OCI-LY7 (cell line): ENCODE measurements at regions of chr5 and their contacts with region 1.

Region 1: GRCh38 chr5:179858586-179859427 is at the start of gene MRNIP:
- DNase-seq: peak; percentile 96
- H3K4me3 ChIP-seq: peak within 1 kb of the TSS; percentile 90
- H3K27ac ChIP-seq: peak within 1 kb of the TSS; percentile 69
- H3K4me1 ChIP-seq: peaks cover 27% of the 10 kb centered on the region
- CTCF ChIP-seq: no peak
- total RNA-seq, gene MRNIP: 76.2 and 78.7 TPM in 2 replicates

Region 2: GRCh38 chr5:179821581-179822432 is 37.0 kb before region 1 on chr5:
- CTCF ChIA-PET with region 1: no interaction called
- POLR2A ChIA-PET with region 1: interaction called, 5 read pairs
- intact Hi-C with region 1: loop called (anchors 1 kb)
- DNase-seq: peak; percentile 80
- H3K4me3 ChIP-seq: peak overlapping the region; percentile 99
- H3K27ac ChIP-seq: peak overlapping the region; percentile 59
- H3K4me1 ChIP-seq: peaks cover 32% of the 10 kb centered on the region
- CTCF ChIP-seq: 0 out of 2 replicates have a peak, but pooled peaks have one; percentile 10

Region 3: DNA sequence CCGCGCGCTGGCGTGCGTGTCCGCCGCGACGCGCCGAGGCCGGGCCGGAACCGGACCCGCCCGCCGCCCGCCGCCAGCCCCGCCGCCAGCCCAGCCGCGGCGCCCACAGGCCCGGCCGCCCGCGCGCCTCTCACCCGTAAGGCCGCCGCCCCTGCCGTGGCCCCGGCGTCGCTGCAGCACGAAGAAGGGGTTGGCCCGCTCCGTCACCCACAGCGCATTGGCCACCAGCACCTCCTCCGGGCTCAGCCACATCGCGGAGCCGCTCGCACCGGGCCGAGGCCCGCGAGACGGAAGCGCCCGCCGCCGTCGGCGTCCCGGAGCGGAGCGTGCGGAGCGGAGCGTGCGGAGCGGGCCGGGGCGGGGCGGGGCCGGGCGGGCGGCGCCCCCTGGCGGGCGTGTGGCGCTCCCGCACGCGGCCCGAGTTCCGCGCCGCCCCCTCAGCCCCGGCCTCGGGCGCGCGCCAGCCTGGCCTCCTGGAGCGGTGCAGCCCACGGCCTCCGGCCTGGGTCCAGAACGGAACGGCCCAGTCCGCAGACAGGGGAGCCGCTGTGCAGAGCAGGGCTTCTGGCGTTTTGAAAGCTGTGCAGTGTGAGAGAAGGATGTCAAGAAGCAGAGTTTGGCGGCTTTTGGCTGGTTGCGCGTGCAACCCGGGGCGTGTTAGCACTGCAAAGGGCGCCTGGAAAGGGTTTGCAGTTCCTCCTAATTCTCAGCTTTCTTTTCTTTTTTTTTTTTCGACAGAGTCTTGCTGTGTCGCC is 48.9 kb after region 1 on chr5 and contains the start of gene TBC1D9B:
- CTCF ChIA-PET with region 1: no interaction called
- POLR2A ChIA-PET with region 1: no interaction called
- intact Hi-C with region 1: loop called (anchors 5 kb)
- DNase-seq: peak; percentile 85
- H3K4me3 ChIP-seq: peak within 1 kb of the TSS; percentile 86
- H3K27ac ChIP-seq: peak within 1 kb of the TSS; percentile 26
- H3K4me1 ChIP-seq: peaks cover 19% of the 10 kb centered on the region
- CTCF ChIP-seq: peak; percentile 31; the same call in 1 of the 2 replicates
- total RNA-seq, gene TBC1D9B: 49.4 and 52.2 TPM in 2 replicates

Region 4: DNA sequence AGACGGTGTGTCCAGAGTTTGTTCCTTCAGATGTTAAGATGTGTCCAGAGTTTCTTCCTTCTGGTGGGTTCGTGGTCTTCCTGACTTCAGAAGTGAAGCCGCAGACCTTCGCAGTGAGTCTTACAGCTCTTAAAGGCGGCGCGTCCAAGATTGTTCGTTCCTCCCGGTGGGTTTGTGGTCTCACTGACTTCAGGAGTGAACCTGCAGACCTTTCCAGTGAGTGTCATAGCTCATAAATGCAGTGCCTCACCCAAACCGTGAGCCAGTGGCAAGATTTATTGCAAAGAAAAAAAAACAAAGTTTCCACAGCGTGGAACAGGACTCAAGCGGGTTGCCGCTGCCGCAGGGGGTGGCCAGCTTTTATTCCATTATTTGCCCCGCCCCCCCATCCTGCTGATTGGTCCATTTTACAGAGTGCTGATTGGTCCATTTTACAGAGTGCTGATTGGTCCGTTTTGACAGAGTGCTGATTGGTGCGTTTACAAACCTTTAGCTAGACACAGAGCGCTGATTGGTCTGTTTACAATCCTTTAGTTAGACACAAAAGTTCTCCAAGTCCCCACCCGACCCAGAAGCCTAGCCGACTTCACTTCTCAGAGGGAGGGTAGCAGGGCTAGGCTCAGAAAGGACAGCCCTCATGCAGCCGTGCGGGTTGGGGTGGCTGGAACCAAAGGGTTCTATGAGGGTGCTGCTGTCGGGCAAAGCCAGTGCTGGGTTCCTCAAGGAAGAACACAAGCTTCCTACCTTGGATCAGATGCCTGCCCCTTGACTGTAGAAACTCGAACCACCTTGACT is 221.9 kb after region 1 on chr5:
- CTCF ChIA-PET with region 1: no interaction called
- POLR2A ChIA-PET with region 1: no interaction called
- intact Hi-C with region 1: no loop called
- DNase-seq: no peak
- H3K4me3 ChIP-seq: no peak overlapping the region
- H3K27ac ChIP-seq: no peak overlapping the region
- H3K4me1 ChIP-seq: peaks cover under 1% of the 10 kb centered on the region
- CTCF ChIP-seq: no peak